ENCODE measurements at regions of chr15 and their contacts with region 1.

Region 1: DNA sequence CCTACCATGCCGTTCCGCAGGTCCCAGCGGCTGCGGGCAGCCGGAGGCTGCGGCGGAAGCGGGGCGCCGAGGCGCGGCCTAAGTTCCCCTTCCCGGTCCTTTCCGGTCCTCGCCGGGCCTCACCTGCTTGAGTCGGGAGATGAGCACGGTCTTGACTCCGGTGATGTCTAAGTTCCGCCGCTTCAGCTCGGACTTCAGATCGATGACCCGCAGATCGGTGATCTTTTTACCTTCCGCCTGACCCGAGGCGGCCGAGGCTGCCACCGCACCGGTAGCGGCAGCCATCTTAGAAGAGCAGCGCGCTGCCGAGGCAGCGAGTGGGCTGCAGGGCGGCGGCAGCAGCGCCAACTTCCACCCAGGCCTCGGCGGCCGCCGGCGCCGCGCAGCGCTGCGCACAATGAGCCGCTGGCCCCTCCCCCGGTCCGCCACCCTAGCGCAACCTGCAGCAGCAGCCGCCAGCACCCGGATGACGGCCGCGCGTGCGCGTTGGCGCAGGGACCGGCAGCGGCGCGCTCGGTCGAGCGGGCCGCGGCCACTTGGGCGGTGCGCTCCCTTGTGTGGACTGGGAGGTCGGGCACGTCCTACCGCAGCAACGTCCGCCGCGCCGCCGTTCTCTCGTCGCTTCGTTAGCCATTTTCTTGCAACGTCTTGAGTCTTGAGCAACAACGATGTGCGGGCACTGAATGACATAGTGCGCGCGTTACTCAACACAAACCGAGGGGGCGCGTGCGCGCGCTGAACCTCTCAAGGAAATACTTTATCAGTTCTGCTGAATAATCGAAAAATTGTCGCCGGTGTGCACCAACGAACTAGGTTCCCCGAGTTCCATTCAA is at the start of gene SLTM:
- DNase-seq: peak; percentile 87 to 98 (median 94)
- ATAC-seq: peak; percentile 92
- H3K4me3 ChIP-seq: peak within 1 kb of the TSS; percentile 83 to 84
- H3K4me3 Mint-ChIP-seq: peak within 1 kb of the TSS; percentile 99
- H3K27ac ChIP-seq: peak within 1 kb of the TSS; percentile 96
- H3K27ac Mint-ChIP-seq: peak within 1 kb of the TSS; percentile 100
- H3K4me1 ChIP-seq: peaks cover 22% of the 10 kb centered on the region
- H3K4me1 Mint-ChIP-seq: peaks cover 35% of the 10 kb centered on the region
- H3K27me3 ChIP-seq: no peaks in the 10 kb centered on the region
- H3K27me3 Mint-ChIP-seq: no peaks in the 10 kb centered on the region
- CTCF ChIP-seq: peak; percentile 30
- total RNA-seq, gene SLTM: 189 to 201 TPM

Region 2: DNA sequence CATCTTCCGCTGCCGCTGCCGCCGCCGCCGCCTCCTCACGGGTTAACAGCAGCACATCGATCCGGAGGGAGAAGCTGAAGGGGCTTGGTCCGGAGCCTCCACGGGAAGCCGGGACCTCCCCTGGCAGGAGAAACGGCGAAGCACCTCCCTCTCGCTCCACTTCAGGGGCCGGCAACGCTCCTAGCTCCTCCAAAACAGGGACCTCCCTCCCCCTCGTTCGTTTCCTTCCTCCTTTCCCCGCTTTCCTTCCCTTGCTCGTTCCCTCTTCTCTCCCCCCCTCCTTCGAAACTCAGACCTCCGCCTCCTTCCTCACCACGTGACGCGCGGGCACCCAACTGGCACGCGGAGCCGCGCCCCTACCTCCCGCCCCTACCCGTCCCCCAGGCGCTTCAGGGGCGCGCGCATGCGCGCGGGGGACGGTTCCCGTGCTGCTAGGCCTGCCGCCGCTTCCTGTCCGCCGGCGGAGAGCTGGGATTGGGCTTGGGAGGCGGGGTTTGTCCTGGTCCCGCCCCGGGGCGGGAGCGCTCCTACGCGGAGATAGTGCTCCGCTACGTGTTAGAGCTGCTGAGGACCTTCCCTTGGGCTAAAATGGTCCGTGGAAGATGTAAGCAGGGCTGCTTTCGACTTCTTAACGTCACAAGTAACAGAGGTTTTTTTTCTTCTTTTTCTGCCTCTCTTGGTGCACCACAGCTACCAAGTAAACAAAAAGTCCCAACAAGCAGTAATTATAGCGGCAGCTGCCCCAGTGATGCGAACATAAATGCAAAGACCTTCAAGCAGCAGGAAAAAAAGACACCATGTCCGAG is 183.8 kb before region 1 on chr15 and contains the start of gene ADAM10:
- CTCF ChIA-PET with region 1: no interaction called
- POLR2A ChIA-PET with region 1: no interaction called
- intact Hi-C with region 1: loop called (anchors 1 to 5 kb)
- DNase-seq: peak; percentile 96 to 99 (median 98)
- ATAC-seq: peak; percentile 89
- H3K4me3 ChIP-seq: peak within 1 kb of the TSS; percentile 98 to 100
- H3K4me3 Mint-ChIP-seq: peak within 1 kb of the TSS; percentile 98
- H3K27ac ChIP-seq: peak within 1 kb of the TSS; percentile 78 to 94
- H3K27ac Mint-ChIP-seq: peak within 1 kb of the TSS; percentile 96
- H3K4me1 ChIP-seq: peaks cover 27% of the 10 kb centered on the region
- H3K4me1 Mint-ChIP-seq: peaks cover 39% of the 10 kb centered on the region
- H3K27me3 ChIP-seq: no peaks in the 10 kb centered on the region
- H3K27me3 Mint-ChIP-seq: no peaks in the 10 kb centered on the region
- CTCF ChIP-seq: no peak
- total RNA-seq, gene ADAM10: 64.2 to 67.8 TPM

Region 3: DNA sequence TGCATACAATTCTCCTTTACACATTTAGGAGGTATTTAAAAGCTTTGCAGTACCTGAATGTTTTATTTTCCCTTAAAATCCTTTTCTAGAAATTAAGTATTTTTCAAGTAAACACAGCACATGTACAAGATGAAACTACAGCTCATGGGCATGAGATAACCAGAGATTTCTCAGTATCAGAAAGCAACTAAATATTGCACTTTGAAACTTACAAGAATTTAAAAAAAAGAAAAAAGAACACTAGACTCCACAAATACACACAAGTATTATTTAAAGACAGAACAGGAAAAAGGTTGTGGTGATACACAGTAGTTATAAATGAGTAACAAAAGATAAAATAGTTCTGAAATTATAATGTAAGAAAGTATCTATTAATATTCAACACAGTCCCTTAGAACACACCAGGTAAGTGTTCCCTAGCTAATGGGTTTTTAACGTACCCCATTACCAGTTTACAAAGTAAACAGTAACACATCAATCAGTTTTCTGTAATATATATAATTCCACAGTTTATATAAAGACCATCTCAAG is 35.3 kb before region 1 on chr15:
- CTCF ChIA-PET with region 1: no interaction called
- POLR2A ChIA-PET with region 1: no interaction called
- intact Hi-C with region 1: loop called in 1 of 2 experiments (anchors 5 kb)
- DNase-seq: no peak
- ATAC-seq: no peak
- H3K4me3 ChIP-seq: no peak overlapping the region
- H3K4me3 Mint-ChIP-seq: no peak overlapping the region
- H3K27ac ChIP-seq: no peak overlapping the region
- H3K27ac Mint-ChIP-seq: no peak overlapping the region
- H3K4me1 ChIP-seq: no peaks in the 10 kb centered on the region
- H3K4me1 Mint-ChIP-seq: peaks cover 12% of the 10 kb centered on the region
- H3K27me3 ChIP-seq: no peaks in the 10 kb centered on the region
- H3K27me3 Mint-ChIP-seq: no peaks in the 10 kb centered on the region
- CTCF ChIP-seq: no peak

Region 4: GRCh38 chr15:58987489-58988005 is 54.0 kb after region 1 on chr15 and contains the start of gene RNF111:
- CTCF ChIA-PET with region 1: no interaction called
- POLR2A ChIA-PET with region 1: interaction called, 6 read pairs
- intact Hi-C with region 1: loop called (anchors 1 kb)
- DNase-seq: peak; percentile 77 to 97 (median 88)
- ATAC-seq: peak; percentile 95
- H3K4me3 ChIP-seq: peak within 1 kb of the TSS; percentile 87 to 100
- H3K4me3 Mint-ChIP-seq: peak within 1 kb of the TSS; percentile 95
- H3K27ac ChIP-seq: peak within 1 kb of the TSS; percentile 84
- H3K27ac Mint-ChIP-seq: peak within 1 kb of the TSS; percentile 94
- H3K4me1 ChIP-seq: peaks cover 23% of the 10 kb centered on the region
- H3K4me1 Mint-ChIP-seq: peaks cover 43% of the 10 kb centered on the region
- H3K27me3 ChIP-seq: no peaks in the 10 kb centered on the region
- H3K27me3 Mint-ChIP-seq: no peaks in the 10 kb centered on the region
- CTCF ChIP-seq: no peak
- total RNA-seq, gene RNF111: 25.2 to 28.4 TPM

Region 5: GRCh38 chr15:59656897-59657634 is 723.6 kb after region 1 on chr15 and contains the start of gene GTF2A2:
- CTCF ChIA-PET with region 1: no interaction called
- POLR2A ChIA-PET with region 1: no interaction called
- intact Hi-C with region 1: loop called (anchors 1 to 5 kb)
- DNase-seq: peak; percentile 82 to 96 (median 93)
- ATAC-seq: peak; percentile 99
- H3K4me3 ChIP-seq: peak within 1 kb of the TSS; percentile 82 to 85
- H3K4me3 Mint-ChIP-seq: peak within 1 kb of the TSS; percentile 51
- H3K27ac ChIP-seq: peak within 1 kb of the TSS; percentile 72 to 87
- H3K27ac Mint-ChIP-seq: peak within 1 kb of the TSS; percentile 83
- H3K4me1 ChIP-seq: peaks cover 24% of the 10 kb centered on the region
- H3K4me1 Mint-ChIP-seq: peaks cover 13% of the 10 kb centered on the region
- H3K27me3 ChIP-seq: no peaks in the 10 kb centered on the region
- H3K27me3 Mint-ChIP-seq: no peaks in the 10 kb centered on the region
- CTCF ChIP-seq: no peak
- total RNA-seq, gene GTF2A2: 62.7 to 63.6 TPM

Region 6: DNA sequence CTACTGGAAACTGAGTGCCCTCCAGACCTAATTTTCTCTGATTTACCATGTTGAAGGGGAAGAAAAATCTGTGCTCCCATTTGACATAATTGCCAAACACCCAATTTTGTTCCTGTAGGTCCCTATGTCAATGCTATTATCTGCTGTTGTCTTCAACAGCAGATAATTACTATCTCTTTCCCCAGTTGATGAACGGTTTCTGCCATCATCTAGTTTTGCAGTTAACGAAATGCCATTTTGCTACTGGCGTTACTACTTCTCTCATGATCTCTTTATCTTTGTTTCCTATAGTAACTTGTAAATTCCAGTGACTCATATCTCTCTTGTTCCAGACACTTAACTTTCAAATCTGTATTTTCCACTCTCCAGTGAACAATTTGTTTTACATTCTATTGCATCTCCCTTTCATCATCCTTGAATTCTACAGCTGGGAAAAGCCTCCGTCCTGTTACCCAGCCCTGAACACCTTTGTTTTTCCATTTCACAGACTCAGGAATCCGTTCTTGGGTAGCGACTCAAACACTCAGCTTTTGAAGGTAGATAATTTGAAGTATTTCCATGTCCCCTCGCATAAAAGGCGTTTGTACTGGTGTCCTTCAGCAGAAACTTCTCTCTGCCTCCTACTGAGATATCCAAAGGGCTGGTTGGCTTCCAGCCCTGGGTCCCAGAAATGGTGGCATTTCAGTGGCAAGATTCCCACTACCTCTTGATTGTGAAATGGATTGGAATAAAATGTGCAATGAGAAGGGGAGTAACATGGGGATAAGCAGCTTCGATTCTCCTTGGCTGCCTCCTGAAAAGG is 1182.3 kb after region 1 on chr15:
- CTCF ChIA-PET with region 1: no interaction called
- POLR2A ChIA-PET with region 1: no interaction called
- intact Hi-C with region 1: no loop called
- DNase-seq: no peak
- ATAC-seq: no peak
- H3K4me3 ChIP-seq: no peak overlapping the region
- H3K4me3 Mint-ChIP-seq: no peak overlapping the region
- H3K27ac ChIP-seq: no peak overlapping the region
- H3K27ac Mint-ChIP-seq: no peak overlapping the region
- H3K4me1 ChIP-seq: no peaks in the 10 kb centered on the region
- H3K4me1 Mint-ChIP-seq: peaks cover 4% of the 10 kb centered on the region
- H3K27me3 ChIP-seq: no peaks in the 10 kb centered on the region
- H3K27me3 Mint-ChIP-seq: peaks cover 3% of the 10 kb centered on the region
- CTCF ChIP-seq: no peak